Activated CD4-positive, alpha-beta memory T cell treated with anti-CD3 and anti-CD28 coated beads for 36 hours (primary cell): ENCODE measurements at regions of chr6 and their contacts with region 1.

Region 1: DNA sequence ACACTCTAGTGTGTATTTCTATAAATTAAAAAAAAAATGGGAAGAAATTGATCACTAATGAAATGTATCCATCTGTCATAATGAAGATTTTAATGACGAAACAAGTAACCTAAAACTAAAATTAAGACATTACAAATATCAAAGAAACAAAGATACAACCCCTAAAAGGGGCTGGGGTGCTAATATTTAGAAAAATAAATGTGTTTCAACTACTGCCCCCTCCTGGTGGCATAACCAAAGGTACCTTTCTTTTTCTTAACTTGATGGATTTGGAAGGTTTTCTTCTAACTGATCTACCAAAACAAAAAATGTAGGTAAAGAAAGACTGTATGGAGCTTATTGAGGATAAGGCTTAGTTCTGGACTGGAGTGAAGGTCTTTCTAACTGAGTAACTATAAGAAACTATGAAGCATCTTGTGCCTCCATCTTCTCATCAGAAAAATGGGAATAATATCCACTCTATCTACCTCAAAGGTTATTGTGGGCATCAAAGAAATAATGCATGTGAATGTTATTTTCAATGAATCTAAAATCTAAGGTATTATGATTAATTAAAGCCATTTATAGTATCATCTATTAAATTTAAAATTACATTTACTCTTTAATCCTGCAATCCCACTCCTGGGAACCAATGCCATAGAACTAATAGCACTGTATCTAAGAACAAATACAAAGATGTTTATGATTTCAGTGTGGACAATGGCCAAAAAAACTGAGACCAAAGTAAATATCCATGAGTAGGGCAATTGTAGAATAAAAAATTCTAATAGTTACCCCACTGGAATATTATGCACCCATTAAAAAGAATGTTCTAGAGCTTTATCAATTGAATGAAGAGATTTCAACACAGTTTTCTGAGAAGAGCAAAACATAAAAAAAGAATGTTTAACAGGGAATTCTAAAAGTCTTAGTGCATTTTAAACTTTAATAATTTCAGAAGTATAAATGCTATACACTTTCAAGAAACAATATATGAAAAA is 117.2 kb downstream of the BACH2 start:
- DNase-seq: no peak
- H3K4me3 Mint-ChIP-seq: no peak overlapping the region
- H3K27ac Mint-ChIP-seq: no peak overlapping the region
- H3K4me1 Mint-ChIP-seq: peaks cover 59% of the 10 kb centered on the region
- H3K27me3 Mint-ChIP-seq: peaks cover 3% of the 10 kb centered on the region

Region 2: DNA sequence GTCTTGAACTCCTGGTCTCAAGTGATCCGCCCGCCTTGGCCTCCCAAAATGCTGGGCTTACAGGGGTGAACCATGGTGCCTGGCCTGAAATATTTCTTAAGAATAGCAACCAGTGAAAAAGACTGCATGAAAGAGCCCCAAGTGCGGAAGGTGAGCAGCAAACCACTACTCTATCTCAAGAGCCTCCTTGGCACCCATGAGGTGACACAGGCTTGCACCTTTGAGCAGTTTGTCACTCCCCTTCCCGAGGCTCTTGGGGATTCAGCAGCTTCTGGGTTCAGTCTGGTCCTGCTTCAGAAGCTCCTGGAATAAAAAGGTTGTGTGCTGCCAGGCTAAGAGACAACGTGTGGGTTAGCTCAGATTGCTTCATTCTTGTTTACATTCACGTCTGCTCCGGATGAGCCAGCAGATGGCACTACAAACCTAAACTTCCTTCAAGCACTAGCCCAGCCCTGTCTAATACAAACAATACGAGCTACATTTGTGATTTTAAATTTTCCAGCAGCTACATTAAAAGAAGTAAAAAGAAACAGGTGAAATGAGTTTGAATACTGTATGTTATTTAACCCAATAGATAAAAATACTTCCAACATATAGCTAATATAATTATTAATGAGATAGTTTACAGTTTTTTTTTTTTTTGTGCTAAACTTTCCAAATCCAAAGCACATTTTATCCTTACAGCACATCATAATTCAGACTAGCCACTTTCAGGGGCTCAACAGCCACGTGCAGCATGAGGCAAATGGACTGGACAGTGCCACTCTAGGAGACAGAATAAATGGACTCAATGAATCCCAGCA is 239.1 kb before region 1 on chr6:
- CTCF ChIA-PET with region 1: interaction called, 20 read pairs
- POLR2A ChIA-PET with region 1: no interaction called
- intact Hi-C with region 1: loop called (anchors 5 kb)
- DNase-seq: peak; percentile 78
- H3K4me3 Mint-ChIP-seq: no peak overlapping the region
- H3K27ac Mint-ChIP-seq: no peak overlapping the region
- H3K4me1 Mint-ChIP-seq: peaks cover 41% of the 10 kb centered on the region
- H3K27me3 Mint-ChIP-seq: no peaks in the 10 kb centered on the region

Region 3: DNA sequence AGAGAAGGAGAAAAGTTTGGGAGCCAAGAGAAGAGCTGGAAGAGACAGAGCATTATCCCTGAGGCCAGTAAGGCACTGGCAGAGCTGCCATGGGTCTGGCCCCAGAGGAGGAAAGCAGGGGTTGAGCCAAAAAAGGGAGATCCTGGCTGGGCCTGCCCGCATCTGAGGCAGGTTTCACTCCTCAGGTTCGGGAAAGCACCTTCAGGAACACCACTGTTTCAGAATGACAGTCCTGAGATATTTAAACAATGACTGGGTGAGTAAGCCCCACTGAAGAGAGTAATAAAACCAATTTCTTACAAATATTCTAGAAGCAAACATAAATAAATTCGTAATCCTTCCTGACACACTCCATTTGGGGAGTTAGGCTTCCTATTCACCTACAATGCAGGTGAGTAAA is 35.1 kb before region 1 on chr6:
- CTCF ChIA-PET with region 1: interaction called, 6 read pairs
- POLR2A ChIA-PET with region 1: interaction called, 3 read pairs
- intact Hi-C with region 1: loop called (anchors 1 kb)
- DNase-seq: peak; percentile 74
- H3K4me3 Mint-ChIP-seq: no peak overlapping the region
- H3K27ac Mint-ChIP-seq: peak overlapping the region; percentile 57
- H3K4me1 Mint-ChIP-seq: peaks cover 54% of the 10 kb centered on the region
- H3K27me3 Mint-ChIP-seq: no peaks in the 10 kb centered on the region

Region 4: DNA sequence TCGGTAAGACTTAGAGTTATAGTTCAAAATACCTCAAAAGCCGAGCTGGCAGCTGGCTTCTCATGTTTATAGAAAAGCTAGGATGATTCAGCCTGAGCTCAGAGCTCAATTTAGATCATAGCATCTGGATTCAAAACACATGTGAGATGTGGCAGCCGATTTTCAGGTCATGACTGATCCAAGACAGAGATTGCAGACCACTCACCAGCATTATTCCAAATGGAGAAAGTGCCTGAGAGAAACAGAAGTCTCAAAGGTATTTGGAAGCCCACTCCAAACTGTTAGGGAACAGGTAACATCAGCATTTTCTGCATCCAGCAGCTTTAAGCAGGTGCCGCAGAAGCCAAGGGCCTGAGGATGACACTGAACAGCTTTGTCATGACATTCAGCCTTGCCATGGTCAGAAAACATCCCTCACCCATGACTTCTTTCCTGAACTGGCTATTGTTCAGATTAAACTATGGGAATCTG is 14.9 kb after region 1 on chr6:
- CTCF ChIA-PET with region 1: interaction called, 16 read pairs
- POLR2A ChIA-PET with region 1: no interaction called
- intact Hi-C with region 1: no loop called
- DNase-seq: no peak
- H3K4me3 Mint-ChIP-seq: no peak overlapping the region
- H3K27ac Mint-ChIP-seq: peak overlapping the region; percentile 49
- H3K4me1 Mint-ChIP-seq: peaks cover 59% of the 10 kb centered on the region
- H3K27me3 Mint-ChIP-seq: no peaks in the 10 kb centered on the region

Region 5: DNA sequence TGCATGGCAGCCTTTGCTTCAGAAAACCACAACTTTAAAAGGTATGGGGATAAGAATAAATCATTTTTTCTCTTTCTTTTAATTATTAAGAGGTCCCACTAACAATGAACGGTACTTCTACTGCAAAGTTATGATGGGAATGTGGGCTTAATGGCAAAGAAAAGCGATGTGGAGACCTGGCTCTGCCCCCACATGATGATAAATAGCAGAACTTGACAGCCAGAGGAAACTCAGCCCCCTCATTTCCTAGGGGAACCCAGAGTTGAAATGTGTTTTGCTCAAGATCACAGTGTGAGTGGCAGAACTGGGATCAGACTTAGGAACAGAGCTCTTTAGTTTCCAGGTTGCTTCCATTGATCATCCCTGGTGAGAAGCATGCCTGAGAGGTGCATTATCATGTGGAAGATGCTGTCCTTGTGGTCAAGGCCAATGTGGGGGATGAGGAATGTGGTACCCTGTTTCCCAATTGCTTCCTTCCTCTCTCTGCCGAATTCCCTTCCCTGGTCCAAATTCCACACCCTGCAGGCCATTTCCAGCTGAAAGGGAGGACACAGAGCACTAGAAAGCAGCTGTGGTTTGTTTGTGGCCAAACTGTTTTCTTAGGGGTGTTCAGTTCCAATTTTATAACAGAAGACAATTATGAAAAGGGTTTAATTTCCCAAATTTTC is 51.2 kb after region 1 on chr6:
- CTCF ChIA-PET with region 1: no interaction called
- POLR2A ChIA-PET with region 1: no interaction called
- intact Hi-C with region 1: loop called (anchors 1 kb)
- DNase-seq: no peak
- H3K4me3 Mint-ChIP-seq: no peak overlapping the region
- H3K27ac Mint-ChIP-seq: no peak overlapping the region
- H3K4me1 Mint-ChIP-seq: peaks cover 88% of the 10 kb centered on the region
- H3K27me3 Mint-ChIP-seq: no peaks in the 10 kb centered on the region

Region 6: GRCh38 chr6:90277302-90278011 is 98.0 kb after region 1 on chr6:
- CTCF ChIA-PET with region 1: no interaction called
- POLR2A ChIA-PET with region 1: no interaction called
- intact Hi-C with region 1: no loop called
- DNase-seq: no peak
- H3K4me3 Mint-ChIP-seq: no peak overlapping the region
- H3K27ac Mint-ChIP-seq: peak overlapping the region; percentile 60
- H3K4me1 Mint-ChIP-seq: peaks cover 86% of the 10 kb centered on the region
- H3K27me3 Mint-ChIP-seq: no peaks in the 10 kb centered on the region